Left lung (tissue), 14 donors: ENCODE measurements at regions of chr1 and their contacts with region 1.

Region 1: DNA sequence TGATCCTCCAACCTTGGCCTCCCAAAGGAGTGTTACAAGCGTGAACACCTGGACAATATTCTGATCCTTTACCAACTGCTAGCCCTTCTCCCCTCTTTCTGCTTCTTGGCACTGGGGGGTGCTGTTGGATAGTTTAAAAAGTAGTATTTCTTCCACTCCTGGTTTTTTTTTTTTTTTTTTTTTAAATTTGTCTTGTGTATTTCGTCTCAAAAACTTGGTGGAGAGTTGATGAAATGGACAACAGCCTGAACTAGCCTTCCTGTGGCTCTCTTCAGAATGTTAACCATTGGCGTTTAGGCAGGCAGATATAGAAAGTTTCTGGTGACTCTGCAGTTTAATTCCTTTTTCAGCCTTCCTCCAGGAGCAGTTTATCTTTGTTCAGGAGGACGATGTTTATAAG is 69.7 kb upstream of the USP24 start:
- DNase-seq: peak in 2 of 4 donors; percentile 51 to 70
- ATAC-seq: peak; percentile 73
- H3K4me3 ChIP-seq: no peak overlapping the region
- H3K27ac ChIP-seq: no peak overlapping the region
- H3K4me1 ChIP-seq: no peaks in the 10 kb centered on the region
- H3K27me3 ChIP-seq: no peaks in the 10 kb centered on the region
- CTCF ChIP-seq: peak; percentile 45 to 63

Region 2: GRCh38 chr1:55337801-55338447 is 53.1 kb after region 1 on chr1:
- intact Hi-C with region 1: loop called in 1 of 2 experiments (anchors 5 kb)
- DNase-seq: no peak
- ATAC-seq: peak; percentile 81
- H3K4me3 ChIP-seq: no peak overlapping the region
- H3K27ac ChIP-seq: no peak overlapping the region
- H3K4me1 ChIP-seq: no peaks in the 10 kb centered on the region
- H3K27me3 ChIP-seq: no peaks in the 10 kb centered on the region
- CTCF ChIP-seq: peak in 1 of 2 donors; percentile 40